Upper lobe of right lung (tissue), 1 donor: ENCODE measurements at regions of chr4 and their contacts with region 1.

Region 1: DNA sequence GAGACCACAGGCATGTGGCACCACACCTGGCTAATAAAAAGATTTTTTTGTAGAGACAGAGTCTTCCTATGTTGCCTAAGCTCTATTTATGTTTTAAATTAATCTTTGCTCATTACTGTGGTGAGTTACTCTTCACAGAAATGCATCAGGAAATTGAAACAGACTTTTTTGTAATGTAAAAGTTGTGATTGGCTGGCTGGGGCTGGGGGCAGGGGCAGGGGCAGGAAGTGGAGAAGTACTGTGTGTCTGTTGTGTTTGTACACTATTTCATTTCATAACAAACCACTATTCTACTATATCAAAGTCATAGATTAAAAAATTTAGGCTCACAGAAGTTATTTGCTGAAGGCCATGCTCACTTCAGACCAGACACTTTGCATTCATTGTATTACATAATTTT is 19.1 kb upstream of the ABRAXAS1 start:
- DNase-seq: no peak
- ATAC-seq: no peak
- H3K4me3 ChIP-seq: no peak overlapping the region
- H3K27ac ChIP-seq: peak overlapping the region; percentile 49
- H3K4me1 ChIP-seq: no peaks in the 10 kb centered on the region
- H3K27me3 ChIP-seq: no peaks in the 10 kb centered on the region
- CTCF ChIP-seq: no peak

Region 2: DNA sequence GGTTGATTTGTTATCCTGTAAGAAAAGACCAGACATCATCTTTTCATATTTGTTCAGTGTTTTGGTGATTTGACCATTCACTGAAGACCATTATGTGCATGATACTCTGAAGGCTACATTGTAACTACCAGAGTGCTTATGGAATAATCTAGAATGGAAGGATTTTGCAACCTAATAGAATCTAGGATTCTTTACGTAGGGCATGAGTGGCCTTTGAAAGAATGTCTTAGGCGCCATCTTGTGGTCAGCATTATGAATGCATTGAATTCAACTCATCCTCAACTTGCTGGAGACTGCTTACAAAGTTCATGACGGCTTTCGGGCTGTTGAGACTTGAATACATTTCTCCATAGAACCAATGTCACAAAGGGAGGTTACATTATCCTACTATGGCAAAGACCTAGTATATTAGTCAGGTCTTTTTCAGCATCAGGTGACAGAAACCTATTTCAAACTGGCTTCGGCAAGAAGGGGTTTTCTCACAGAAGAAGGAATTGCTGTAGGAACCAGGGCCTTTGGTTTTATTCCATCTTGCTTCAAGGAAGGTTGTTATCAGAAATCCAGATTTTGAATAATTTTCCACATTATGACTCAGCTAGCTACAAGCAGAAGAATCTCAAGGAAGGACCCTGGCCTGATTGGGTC is 136.0 kb after region 1 on chr4:
- intact Hi-C with region 1: loop called (anchors 10 kb)
- DNase-seq: no peak
- ATAC-seq: peak; percentile 93
- H3K4me3 ChIP-seq: no peak overlapping the region
- H3K27ac ChIP-seq: no peak overlapping the region
- H3K4me1 ChIP-seq: no peaks in the 10 kb centered on the region
- H3K27me3 ChIP-seq: no peaks in the 10 kb centered on the region
- CTCF ChIP-seq: peak; percentile 89